HepG2 (cell line): ENCODE measurements at regions of chr11 and their contacts with region 1.

Region 1: DNA sequence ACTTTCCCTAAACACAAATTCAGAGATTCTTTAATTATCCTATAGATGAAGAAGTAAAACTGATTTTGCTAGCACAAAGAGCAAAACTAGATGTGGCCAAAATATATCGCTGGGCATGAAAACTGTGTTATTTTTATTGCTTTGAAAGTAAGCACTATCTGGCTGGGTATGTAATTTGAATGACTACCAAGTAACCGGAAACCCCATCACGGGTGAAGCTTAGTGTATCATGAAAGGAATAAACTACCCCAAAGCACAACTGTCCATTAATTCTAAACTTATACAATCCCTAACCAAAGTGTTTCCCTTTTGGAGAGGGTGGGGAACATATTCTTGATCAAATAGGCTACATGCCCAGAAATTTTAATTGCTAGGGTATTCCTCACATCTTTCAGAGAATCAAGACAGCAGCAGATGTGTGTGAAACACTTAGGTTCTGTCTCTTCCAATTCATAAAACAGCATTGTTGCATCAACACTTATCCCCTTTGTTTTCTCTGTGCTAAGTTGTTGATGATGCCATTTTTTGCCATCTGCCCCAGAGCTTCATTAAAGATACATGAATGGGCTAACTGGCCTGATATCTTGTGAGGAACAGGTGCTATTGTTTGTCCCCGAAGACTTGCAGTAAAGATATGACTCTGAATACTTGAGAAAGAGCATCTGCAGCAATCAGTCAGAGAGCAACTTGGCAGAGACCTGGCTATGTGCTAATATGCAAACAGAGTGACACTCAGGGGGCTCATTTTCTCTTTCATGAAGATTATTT is 238.2 kb downstream of the SOX6 start:
- DNase-seq: no peak
- ATAC-seq: no peak
- H3K4me3 ChIP-seq: no peak overlapping the region
- H3K27ac ChIP-seq: no peak overlapping the region
- H3K4me1 ChIP-seq: peaks cover 40% of the 10 kb centered on the region
- H3K27me3 ChIP-seq: no peaks in the 10 kb centered on the region
- CTCF ChIP-seq: no peak
- EP300 ChIP-seq: no peak
- POLR2A ChIP-seq: no peak
- RAD21 ChIP-seq: no peak

Region 2: DNA sequence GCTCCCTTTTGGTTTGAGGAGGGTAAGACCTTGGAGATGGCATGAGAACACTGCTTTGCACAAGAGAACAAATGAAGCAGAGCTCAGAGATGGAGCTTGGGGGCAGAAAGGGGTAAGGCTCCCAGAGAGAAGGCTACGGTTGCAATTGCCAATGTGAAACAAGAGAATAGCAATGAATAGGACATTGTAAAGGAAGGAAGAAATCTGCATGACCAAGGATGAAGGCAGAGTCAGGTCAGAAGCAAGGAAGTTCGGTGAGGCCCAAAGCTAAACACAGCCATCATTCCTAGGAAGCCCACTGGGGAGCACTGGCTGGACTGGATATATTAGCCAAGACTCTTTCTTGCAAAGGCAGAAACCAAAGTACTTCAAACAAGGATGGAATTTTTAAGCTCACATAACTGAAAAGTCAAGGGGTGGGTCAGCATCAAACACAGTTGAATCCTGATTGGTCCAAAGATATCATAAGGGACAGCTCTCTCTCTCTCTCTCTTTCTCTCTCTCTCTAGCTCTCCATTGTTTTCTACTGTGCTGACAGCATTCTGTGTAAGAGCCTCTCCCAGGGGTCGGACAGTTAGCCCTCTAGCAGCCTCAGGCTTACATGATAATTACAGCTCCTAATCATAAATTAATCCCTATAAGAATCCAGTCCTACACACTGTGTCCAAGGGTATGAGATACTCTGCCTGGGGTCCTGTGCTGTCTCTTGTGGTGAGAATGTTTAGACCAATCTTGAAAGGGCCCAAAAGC is 246.1 kb before region 1 on chr11:
- CTCF ChIA-PET with region 1: no interaction called
- POLR2A ChIA-PET with region 1: no interaction called
- in situ Hi-C with region 1: no loop called
- intact Hi-C with region 1: no loop called
- DNase-seq: no peak
- ATAC-seq: no peak
- H3K4me3 ChIP-seq: no peak overlapping the region
- H3K27ac ChIP-seq: no peak overlapping the region
- H3K4me1 ChIP-seq: no peaks in the 10 kb centered on the region
- H3K27me3 ChIP-seq: no peaks in the 10 kb centered on the region
- CTCF ChIP-seq: no peak
- EP300 ChIP-seq: no peak
- POLR2A ChIP-seq: no peak
- RAD21 ChIP-seq: no peak

Region 3: DNA sequence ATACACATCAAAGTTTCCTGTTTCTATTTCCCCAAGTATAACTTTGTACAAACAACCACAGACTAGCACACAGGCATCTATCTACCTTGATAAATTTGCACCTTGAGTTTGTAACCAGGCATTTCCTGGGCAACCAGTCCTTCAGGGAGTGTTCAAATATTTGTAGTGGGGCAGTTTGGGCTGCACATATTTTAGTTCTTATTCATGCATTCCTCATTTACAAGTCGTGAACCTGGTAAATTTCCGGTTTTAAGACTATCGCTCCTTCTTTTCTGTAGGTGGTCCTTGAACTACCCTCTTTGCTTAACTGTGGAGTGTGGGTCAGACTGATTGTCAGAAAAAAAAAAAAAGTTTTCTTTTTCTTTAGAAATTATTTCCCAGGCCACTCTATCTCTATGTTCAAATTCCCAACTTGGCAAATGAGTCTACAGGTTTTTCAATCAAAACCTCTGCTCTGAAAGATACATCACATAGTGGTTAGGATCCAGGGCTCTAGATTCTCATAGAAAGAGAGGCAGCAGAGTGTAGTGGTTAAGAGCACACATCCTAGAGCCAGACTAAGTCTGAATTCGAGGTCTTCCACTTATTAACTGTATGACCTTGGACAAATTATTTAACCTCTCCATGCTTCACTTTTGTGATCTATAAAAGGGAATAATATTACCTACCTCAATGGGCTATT is 36.7 kb after region 1 on chr11:
- CTCF ChIA-PET with region 1: no interaction called
- POLR2A ChIA-PET with region 1: no interaction called
- in situ Hi-C with region 1: no loop called
- intact Hi-C with region 1: loop called (anchors 2 kb)
- DNase-seq: peak; percentile 93
- ATAC-seq: peak; percentile 98
- H3K4me3 ChIP-seq: no peak overlapping the region; a peak in 1 of 6 replicates
- H3K27ac ChIP-seq: peak overlapping the region; percentile 82
- H3K4me1 ChIP-seq: peaks cover 58% of the 10 kb centered on the region
- H3K27me3 ChIP-seq: no peaks in the 10 kb centered on the region
- CTCF ChIP-seq: no peak
- EP300 ChIP-seq: peak; percentile 48 to 88; a peak in 3 of 4 replicates
- POLR2A ChIP-seq: no peak
- RAD21 ChIP-seq: no peak

Region 4: DNA sequence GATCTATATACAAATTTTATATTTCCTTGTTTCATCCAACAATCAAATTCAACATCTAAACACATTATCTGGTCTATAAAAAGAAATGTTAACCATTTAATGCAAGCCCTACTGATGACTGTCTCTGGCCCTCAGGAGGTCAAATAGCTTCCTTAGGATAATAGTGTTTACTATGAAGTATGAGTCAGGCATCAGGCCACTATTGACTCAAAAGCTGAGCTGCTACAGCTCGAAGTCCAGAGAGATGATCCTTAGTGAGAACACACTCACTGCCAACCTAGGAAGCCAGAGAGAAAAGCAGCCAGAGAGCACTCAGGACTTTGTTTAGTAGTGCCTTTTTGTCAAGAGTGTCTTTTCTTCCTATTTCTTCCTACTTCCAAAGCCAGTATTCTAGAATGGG is 66.4 kb after region 1 on chr11:
- CTCF ChIA-PET with region 1: no interaction called
- POLR2A ChIA-PET with region 1: interaction called, 5 read pairs
- in situ Hi-C with region 1: no loop called
- intact Hi-C with region 1: loop called (anchors 2 kb)
- DNase-seq: peak; percentile 94
- ATAC-seq: peak; percentile 100
- H3K4me3 ChIP-seq: peak overlapping the region in 1 of 3 experiments; percentile 27; a peak in 1 of 6 replicates
- H3K27ac ChIP-seq: peak overlapping the region; percentile 70
- H3K4me1 ChIP-seq: peaks cover 45% of the 10 kb centered on the region
- H3K27me3 ChIP-seq: no peaks in the 10 kb centered on the region
- CTCF ChIP-seq: no peak
- EP300 ChIP-seq: peak; percentile 64 to 86; a peak in 3 of 4 replicates
- POLR2A ChIP-seq: no peak
- RAD21 ChIP-seq: peak; percentile 34; the same call in 1 of the 2 replicates

Region 5: GRCh38 chr11:16402654-16403447 is 284.7 kb after region 1 on chr11:
- CTCF ChIA-PET with region 1: no interaction called
- POLR2A ChIA-PET with region 1: no interaction called
- in situ Hi-C with region 1: no loop called
- intact Hi-C with region 1: loop called (anchors 5 kb)
- DNase-seq: peak; percentile 92
- ATAC-seq: peak; percentile 88
- H3K4me3 ChIP-seq: peak overlapping the region in 1 of 3 experiments; percentile 2; a peak in 1 of 6 replicates
- H3K27ac ChIP-seq: peak overlapping the region; percentile 72
- H3K4me1 ChIP-seq: peaks cover 68% of the 10 kb centered on the region
- H3K27me3 ChIP-seq: no peaks in the 10 kb centered on the region
- CTCF ChIP-seq: no peak
- EP300 ChIP-seq: peak; percentile 22 to 56; a peak in 1 of 4 replicates
- POLR2A ChIP-seq: no peak
- RAD21 ChIP-seq: no peak

Region 6: GRCh38 chr11:16749666-16750065 is 631.5 kb after region 1 on chr11:
- CTCF ChIA-PET with region 1: no interaction called
- POLR2A ChIA-PET with region 1: no interaction called
- in situ Hi-C with region 1: no loop called
- intact Hi-C with region 1: no loop called
- DNase-seq: no peak
- ATAC-seq: no peak
- H3K4me3 ChIP-seq: no peak overlapping the region
- H3K27ac ChIP-seq: no peak overlapping the region
- H3K4me1 ChIP-seq: peaks cover 1% of the 10 kb centered on the region
- H3K27me3 ChIP-seq: no peaks in the 10 kb centered on the region
- CTCF ChIP-seq: no peak
- EP300 ChIP-seq: no peak
- POLR2A ChIP-seq: no peak
- RAD21 ChIP-seq: no peak